ENCODE measurements at regions of chr7 and their contacts with region 1.

Region 1: DNA sequence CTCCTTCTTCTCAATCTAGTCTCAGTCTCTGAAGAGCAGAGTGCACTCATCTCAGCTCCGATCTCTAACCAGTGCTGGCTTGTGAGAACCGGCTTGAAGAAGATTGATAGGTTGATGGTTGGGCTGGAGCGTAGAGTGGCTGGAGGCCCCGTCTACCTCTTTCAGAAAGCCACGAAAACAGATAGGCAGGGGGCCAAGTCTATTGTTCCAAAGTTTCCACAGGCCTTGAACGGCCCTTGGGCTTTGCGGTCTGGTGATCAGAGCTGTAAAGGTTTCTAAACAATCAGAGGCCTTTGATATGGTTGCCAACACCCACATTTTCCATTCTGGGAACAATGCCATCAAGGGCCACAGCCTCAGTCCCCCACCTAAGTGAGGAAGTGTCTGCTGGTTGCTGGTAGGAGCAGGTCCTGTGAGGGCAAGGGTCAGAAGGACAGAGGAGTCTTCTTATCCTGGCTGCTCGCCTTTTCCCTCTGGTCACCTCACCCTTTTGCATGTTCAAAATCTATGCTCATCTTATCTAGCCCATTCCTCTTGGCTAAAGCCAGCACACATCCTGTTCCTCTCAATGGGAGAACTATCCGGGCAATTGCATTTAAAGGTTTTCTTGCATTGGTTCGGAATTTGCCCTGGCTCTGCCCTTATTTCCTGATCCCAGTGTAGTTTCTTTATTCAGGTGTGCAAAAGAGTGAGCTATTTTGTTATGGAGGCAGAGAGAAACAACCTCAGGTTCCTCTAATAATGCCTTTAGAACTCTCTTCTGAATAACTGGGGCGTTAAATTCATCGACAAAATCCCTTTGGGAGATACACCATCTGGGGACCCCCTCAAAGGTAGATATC is 70.3 kb upstream of the KMT2E start:
- DNase-seq: peak; percentile 70
- H3K4me3 Mint-ChIP-seq: peak overlapping the region; percentile 96
- H3K27ac Mint-ChIP-seq: peak overlapping the region; percentile 100
- H3K4me1 Mint-ChIP-seq: peaks cover 72% of the 10 kb centered on the region
- H3K27me3 Mint-ChIP-seq: peaks cover 2% of the 10 kb centered on the region

Region 2: DNA sequence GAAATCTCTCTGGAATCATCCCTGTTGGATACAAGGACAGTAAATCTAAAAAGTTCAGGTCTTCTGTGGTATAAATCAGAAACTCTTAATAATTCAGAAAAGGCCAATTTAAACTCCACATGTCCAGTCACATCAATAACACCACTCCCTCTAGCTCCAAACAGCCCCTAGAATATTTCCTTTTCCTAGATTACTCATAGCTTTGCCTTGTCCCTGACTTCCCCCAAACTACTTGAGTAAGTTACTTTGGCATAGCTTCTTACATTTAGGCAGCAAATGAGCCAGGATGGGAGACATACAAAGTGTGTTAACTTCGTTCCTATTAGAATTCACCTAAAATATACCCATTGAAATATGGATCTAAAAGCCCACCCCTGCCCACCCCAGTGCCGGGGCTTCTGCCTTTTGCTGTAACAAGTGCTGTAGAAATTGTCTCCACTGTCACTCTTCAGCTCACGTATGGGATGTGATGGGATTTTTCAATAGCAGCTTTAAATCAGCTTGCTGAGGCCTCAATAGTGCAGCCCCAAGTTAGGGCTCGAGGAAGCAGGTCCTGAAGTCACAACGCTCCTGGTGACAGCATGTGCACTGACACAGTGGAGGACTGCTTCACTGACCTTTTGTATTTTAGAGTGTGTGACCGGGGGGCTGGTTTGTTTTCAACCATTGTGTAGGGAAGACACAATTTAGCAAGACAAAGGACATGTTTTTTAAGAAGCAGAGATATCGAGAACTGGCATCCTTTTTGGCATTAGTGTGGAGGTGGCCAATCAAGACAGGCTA is 147.9 kb before region 1 on chr7:
- intact Hi-C with region 1: no loop called
- DNase-seq: no peak
- H3K4me3 Mint-ChIP-seq: no peak overlapping the region
- H3K27ac Mint-ChIP-seq: no peak overlapping the region
- H3K4me1 Mint-ChIP-seq: no peaks in the 10 kb centered on the region
- H3K27me3 Mint-ChIP-seq: peaks cover 7% of the 10 kb centered on the region

Region 3: DNA sequence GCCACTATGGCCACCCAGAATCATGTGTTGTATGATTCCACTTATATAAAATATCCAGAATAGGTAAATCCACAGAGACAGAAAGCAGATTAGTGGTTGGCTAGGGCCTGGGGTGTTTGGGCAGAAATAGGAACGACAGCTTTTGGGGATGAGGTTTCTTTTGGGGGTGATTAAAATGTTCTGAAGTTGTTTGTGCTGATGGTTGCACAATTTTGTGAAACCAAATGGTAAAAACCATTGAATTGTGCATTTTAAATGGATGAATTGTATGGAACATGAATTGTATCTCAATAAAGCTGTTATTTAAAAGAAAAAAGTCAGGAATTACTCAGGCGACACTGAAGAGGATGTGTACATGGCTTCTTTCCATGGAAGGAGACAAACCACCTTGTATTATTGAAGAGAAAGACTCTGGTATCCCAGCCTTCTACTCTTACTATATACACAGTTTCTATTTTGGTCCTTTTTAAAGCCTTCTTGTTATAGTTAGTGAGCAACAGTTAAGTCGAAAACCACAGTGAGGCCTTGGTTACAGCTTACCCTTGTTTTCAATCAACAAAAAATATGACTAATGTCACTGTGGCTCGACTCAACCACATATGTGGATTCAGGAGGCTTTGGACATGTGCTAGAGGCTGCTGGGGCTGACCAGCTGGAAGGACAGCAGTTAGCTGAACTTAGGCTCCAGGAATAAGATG is 13.2 kb after region 1 on chr7:
- intact Hi-C with region 1: loop called (anchors 1 kb)
- DNase-seq: peak; percentile 62
- H3K4me3 Mint-ChIP-seq: peak overlapping the region; percentile 69
- H3K27ac Mint-ChIP-seq: peak overlapping the region; percentile 100
- H3K4me1 Mint-ChIP-seq: peaks cover 67% of the 10 kb centered on the region
- H3K27me3 Mint-ChIP-seq: no peaks in the 10 kb centered on the region

Region 4: DNA sequence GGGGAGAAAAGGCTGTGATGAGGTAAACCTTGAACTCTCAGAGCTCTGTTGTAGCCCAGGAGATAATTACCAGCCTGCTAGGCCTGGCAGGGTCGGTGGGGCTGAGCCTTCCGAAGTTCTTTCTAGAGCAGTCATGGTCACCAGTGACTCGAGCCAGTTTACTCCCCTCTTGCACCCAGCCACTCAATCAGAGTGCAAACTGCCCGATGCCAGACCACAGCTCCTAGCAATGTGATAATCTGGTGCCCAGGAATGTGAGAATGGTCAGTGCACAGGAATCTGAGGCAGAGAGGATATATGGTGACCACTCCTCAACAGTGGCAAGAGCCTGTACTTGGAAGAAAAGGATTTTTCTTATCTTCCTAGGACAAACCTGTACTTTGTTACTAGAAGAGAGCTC is 23.9 kb after region 1 on chr7:
- intact Hi-C with region 1: no loop called
- DNase-seq: no peak
- H3K4me3 Mint-ChIP-seq: no peak overlapping the region
- H3K27ac Mint-ChIP-seq: no peak overlapping the region
- H3K4me1 Mint-ChIP-seq: peaks cover 29% of the 10 kb centered on the region
- H3K27me3 Mint-ChIP-seq: no peaks in the 10 kb centered on the region

Region 5: GRCh38 chr7:105346593-105347322 is 403.0 kb after region 1 on chr7:
- intact Hi-C with region 1: loop called (anchors 2 kb)
- DNase-seq: peak; percentile 35
- H3K4me3 Mint-ChIP-seq: peak overlapping the region; percentile 42
- H3K27ac Mint-ChIP-seq: peak overlapping the region; percentile 52
- H3K4me1 Mint-ChIP-seq: peaks cover 40% of the 10 kb centered on the region
- H3K27me3 Mint-ChIP-seq: no peaks in the 10 kb centered on the region

Region 6: DNA sequence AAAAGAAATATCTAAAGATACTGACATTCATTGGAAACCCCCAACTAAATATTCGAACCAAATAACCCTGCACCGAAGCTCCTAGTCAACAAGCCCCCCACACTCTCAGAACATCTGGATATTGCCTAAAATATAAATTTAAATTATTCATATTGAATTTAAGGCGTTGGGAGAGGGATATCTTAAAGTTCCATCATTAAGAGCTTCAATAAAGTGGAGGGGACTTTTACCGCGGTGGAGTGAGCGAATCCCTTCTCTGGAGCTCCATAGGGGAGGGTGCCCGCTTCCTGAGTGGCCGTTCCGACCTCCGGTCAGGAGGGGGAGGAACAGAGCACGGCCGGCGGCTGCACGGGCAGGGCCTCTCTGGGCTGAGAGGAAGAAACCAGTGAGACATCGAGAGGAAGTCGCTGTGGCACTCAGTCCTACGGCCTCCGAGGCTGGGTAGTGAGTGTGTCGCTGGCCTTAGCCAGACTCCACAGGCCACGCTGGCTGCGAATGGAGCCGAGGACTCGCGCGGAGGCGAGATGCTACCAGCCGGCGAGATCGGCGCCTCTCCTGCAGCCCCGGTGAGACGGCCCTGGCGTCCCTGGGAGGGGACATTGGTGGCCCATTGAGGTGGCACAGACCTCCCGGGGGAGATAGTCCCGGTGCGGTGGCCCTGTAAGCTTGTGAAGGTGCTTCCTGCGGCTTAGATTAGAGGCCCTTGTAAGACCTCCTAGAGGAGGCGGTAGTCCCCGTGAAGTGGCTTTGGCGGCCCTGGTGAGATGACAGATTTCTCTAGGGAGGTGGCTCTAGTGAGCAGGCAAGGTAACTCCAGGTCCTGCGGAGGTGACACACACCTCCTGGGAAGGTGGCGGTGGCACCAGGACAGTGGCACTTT is 588.3 kb after region 1 on chr7 and contains the start of gene RINT1:
- intact Hi-C with region 1: loop called (anchors 5 kb)
- DNase-seq: peak; percentile 85
- H3K4me3 Mint-ChIP-seq: peak within 1 kb of the TSS; percentile 93
- H3K27ac Mint-ChIP-seq: peak within 1 kb of the TSS; percentile 95
- H3K4me1 Mint-ChIP-seq: peaks cover 21% of the 10 kb centered on the region
- H3K27me3 Mint-ChIP-seq: peaks cover 1% of the 10 kb centered on the region
- total RNA-seq, gene RINT1: 21.9 and 32.5 TPM in 2 replicates